ENCODE measurements at regions of chr6 and their contacts with region 1.

Region 1: DNA sequence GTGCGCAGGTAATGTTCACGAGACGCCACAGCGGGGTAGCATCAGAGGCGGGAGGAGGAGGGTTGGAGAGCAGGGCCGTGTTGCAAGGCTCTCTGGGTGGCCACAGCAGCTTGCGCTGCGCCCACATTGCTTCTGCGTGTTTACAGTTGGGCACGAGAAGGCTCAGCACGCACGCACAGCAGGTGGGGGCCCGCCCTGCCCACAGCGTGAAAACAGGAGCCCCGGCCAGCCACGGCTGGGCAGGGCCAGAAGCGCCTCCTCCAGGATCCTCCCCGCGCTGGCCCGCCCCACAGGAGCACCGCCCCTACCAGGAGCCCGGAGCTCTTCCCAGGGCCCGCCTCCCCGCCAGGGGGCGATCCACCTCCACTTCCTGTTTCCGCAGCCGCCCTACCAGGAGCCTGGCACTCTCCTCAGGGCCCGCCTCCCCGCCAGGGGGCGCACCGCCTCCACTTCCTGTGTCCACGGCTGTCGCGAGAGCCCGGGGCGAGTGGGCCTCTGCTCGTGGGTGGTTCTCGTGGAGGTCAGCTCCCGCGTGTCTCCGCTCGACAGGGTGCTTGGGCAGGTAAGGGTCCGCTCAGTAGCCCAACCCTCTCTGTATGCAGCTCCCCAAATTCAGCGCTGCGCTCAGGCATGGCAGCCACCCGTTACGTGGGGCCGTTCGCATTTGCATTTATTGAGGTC is at the start of gene FAM50B:
- DNase-seq: peak; percentile 95
- ATAC-seq: peak; percentile 87
- H3K4me3 Mint-ChIP-seq: peak within 1 kb of the TSS; percentile 73
- H3K27ac Mint-ChIP-seq: peak within 1 kb of the TSS; percentile 85
- H3K4me1 Mint-ChIP-seq: peaks cover 30% of the 10 kb centered on the region
- H3K27me3 Mint-ChIP-seq: no peaks in the 10 kb centered on the region
- total RNA-seq, gene FAM50B: 8.8 to 10.2 TPM

Region 2: GRCh38 chr6:3867641-3868502 is 18.8 kb after region 1 on chr6:
- CTCF ChIA-PET with region 1: interaction called, 9 read pairs
- POLR2A ChIA-PET with region 1: interaction called, 5 read pairs
- intact Hi-C with region 1: loop called (anchors 1 kb)
- DNase-seq: peak; percentile 23
- ATAC-seq: peak; percentile 89
- H3K4me3 Mint-ChIP-seq: peak overlapping the region; percentile 2
- H3K27ac Mint-ChIP-seq: peak overlapping the region; percentile 93
- H3K4me1 Mint-ChIP-seq: peaks cover 35% of the 10 kb centered on the region
- H3K27me3 Mint-ChIP-seq: peaks cover 9% of the 10 kb centered on the region

Region 3: DNA sequence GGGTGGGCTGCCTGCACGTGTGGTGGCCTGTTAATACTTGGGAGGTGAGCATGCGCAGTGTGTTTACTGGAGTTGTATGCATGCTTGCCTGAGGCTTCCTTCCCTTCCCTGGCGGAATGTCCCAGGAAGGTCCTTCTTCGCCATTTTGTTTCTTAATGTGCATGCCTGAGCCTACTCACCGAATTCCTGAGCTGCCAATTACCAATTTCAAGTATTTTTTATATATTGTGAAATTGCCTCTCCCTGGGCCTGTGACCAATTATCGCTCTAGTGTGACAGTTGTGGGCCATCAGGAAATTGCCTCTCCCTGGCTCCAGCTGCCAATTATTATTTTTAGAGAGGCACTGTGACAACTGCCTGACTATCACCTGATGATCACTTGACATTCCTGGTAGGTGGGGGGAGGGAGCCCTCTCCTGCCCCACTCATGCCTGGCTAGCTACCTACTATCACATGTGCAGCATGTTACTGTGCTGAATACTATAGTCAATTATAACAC is 70.1 kb after region 1 on chr6:
- CTCF ChIA-PET with region 1: interaction called, 8 read pairs
- POLR2A ChIA-PET with region 1: no interaction called
- intact Hi-C with region 1: loop called in 1 of 2 experiments (anchors 5 kb)
- DNase-seq: no peak
- ATAC-seq: no peak
- H3K4me3 Mint-ChIP-seq: no peak overlapping the region
- H3K27ac Mint-ChIP-seq: no peak overlapping the region
- H3K4me1 Mint-ChIP-seq: peaks cover 22% of the 10 kb centered on the region
- H3K27me3 Mint-ChIP-seq: peaks cover 4% of the 10 kb centered on the region

Region 4: GRCh38 chr6:4008324-4009047 is 159.4 kb after region 1 on chr6:
- CTCF ChIA-PET with region 1: interaction called, 4 read pairs
- POLR2A ChIA-PET with region 1: no interaction called
- intact Hi-C with region 1: loop called in 1 of 2 experiments (anchors 2 kb)
- DNase-seq: no peak
- ATAC-seq: peak; percentile 57
- H3K4me3 Mint-ChIP-seq: no peak overlapping the region
- H3K27ac Mint-ChIP-seq: peak overlapping the region; percentile 58
- H3K4me1 Mint-ChIP-seq: peaks cover 51% of the 10 kb centered on the region
- H3K27me3 Mint-ChIP-seq: no peaks in the 10 kb centered on the region

Region 5: GRCh38 chr6:4135665-4136353 is 286.7 kb after region 1 on chr6:
- CTCF ChIA-PET with region 1: interaction called, 5 read pairs
- POLR2A ChIA-PET with region 1: no interaction called
- intact Hi-C with region 1: loop called in 1 of 2 experiments (anchors 1 kb)
- DNase-seq: peak; percentile 98
- ATAC-seq: peak; percentile 92
- H3K4me3 Mint-ChIP-seq: peak overlapping the region; percentile 79
- H3K27ac Mint-ChIP-seq: peak overlapping the region; percentile 85
- H3K4me1 Mint-ChIP-seq: peaks cover 46% of the 10 kb centered on the region
- H3K27me3 Mint-ChIP-seq: no peaks in the 10 kb centered on the region

Measured in activated CD4-positive, alpha-beta T cell treated with anti-CD3 and anti-CD28 coated beads for 36 hours (primary cell).